Pancreas (tissue), 10 donors: ENCODE measurements at regions of chr1 and their contacts with region 1.

Region 1: DNA sequence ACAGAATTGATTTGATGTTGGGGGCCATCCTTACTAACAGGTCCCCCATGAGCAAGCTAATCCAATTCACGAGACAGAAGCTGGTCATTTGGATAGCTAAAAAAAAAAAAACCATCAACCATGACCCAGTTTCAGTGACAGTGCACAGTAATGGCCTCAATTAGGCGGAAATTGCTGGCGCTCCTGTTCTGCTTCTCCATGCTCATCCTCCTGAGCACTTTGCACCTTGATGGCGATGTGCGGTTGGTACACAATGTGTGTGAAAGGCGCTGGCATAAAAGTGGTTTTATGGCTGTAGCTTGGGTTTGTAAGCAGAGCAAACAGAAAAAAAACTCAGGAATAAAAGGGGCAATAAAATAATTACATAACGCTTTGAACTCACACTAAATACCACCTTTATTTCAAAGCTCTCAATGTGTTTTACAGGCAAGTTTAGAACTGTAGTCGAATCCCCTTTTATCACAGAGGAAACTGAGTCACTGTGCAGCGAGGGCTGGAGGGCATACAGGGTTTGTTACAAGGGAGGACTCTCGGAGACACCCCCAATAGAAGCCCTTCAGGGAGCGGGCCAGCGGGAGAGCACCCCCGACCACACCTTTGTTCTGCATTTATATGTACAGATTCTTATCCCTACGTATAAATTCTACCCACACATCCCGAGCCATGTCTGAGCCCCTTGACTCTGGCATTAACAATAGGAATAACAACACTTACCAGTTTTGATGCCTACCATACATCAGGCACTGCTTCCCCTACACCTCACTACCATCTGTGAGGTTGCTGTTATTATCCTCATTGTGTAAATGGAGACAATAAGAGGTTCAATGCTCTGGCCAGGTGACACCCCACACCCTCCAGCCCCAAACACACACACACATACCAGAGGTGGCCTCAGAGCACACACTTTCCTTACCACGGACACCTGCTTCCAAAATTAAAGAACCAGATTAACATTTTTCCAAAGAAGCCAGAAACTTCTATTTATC is 213.5 kb upstream of the IRF2BP2 start:
- DNase-seq: no peak
- ATAC-seq: peak in 2 of 4 donors; percentile 58 to 60
- H3K4me3 ChIP-seq: no peak overlapping the region
- H3K27ac ChIP-seq: no peak overlapping the region
- H3K4me1 ChIP-seq: peaks cover 0 to 3% (median 0%) of the 10 kb centered on the region in 3 donors
- H3K27me3 ChIP-seq: no peaks in the 10 kb centered on the region
- CTCF ChIP-seq: no peak

Region 2: DNA sequence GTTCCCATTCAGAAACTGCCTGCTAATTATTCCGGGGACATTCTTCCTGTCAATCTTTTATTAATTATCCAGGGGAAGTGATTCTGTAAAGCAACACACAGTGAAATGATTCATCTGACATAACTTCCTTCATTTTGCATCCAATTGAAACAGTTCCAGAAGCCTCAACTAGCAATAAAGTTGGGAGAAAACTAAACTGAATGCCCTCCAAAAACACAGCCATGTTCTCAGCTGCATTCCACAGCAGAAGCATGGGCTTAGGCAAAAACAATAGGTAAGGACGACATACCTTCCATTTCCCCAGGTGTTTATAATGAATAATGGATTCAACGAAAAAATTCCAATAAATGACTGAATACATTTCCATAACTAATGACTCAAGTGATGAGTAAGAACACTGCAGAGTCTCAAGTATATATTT is 307.7 kb before region 1 on chr1:
- intact Hi-C with region 1: no loop called
- DNase-seq: no peak
- ATAC-seq: peak; percentile 18 to 70 (median 37)
- H3K4me3 ChIP-seq: no peak overlapping the region
- H3K27ac ChIP-seq: peak overlapping the region in 3 of 4 donors; percentile 17 to 56 (median 54)
- H3K4me1 ChIP-seq: peaks cover 2 to 12% (median 6%) of the 10 kb centered on the region in 3 donors
- H3K27me3 ChIP-seq: no peaks in the 10 kb centered on the region
- CTCF ChIP-seq: no peak

Region 3: DNA sequence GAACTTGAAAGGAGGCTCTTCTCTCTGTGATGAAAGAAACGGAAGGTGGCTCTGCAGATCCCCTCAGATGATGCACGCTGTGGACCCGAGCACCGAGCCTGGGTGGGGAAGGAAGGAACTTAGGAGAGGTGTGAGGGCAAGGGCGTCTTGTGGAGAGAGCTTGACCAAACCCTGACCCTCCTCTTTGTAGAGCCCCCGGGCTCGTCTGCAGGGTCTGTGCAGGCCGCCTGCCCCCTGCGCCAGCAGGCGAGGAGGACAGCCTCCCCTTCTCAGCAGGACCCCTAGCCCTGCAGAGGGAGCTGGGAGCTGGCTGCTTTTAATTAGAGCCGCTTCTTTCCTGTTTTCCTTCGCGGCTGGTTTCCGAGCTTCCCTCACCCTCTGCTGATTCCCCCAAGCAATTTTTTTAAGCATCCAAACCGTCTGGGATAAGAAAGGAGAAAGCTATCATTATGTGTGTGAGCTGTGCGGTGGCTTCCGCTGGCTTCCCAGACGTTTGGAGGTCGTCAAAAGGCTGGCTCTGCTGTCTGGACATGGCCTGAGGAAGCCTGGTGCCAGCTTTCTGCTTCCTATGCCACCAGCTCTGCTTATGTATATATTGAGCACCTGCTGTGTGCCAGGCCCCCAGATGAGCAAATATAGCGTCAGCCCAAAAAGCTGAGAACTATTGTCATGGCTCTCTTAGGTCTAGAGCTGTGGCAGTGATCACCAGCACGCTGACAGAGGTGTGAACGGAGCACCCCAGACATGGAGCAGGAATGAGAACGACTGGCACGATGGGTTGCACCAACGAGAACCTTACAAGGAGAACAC is 53.3 kb before region 1 on chr1:
- intact Hi-C with region 1: loop called in 1 of 3 experiments (anchors 10 kb)
- DNase-seq: no peak
- ATAC-seq: no peak
- H3K4me3 ChIP-seq: no peak overlapping the region
- H3K27ac ChIP-seq: no peak overlapping the region
- H3K4me1 ChIP-seq: peaks cover 0 to 4% (median 0%) of the 10 kb centered on the region in 3 donors
- H3K27me3 ChIP-seq: no peaks in the 10 kb centered on the region
- CTCF ChIP-seq: no peak